Activated CD4-positive, alpha-beta memory T cell treated with anti-CD3 and anti-CD28 coated beads, Interleukin-2, amount 10 ng/mL, durations not matched to agents 7 days and 5 days (primary cell): ENCODE measurements at regions of chr1 and their contacts with region 1.

Region 1: DNA sequence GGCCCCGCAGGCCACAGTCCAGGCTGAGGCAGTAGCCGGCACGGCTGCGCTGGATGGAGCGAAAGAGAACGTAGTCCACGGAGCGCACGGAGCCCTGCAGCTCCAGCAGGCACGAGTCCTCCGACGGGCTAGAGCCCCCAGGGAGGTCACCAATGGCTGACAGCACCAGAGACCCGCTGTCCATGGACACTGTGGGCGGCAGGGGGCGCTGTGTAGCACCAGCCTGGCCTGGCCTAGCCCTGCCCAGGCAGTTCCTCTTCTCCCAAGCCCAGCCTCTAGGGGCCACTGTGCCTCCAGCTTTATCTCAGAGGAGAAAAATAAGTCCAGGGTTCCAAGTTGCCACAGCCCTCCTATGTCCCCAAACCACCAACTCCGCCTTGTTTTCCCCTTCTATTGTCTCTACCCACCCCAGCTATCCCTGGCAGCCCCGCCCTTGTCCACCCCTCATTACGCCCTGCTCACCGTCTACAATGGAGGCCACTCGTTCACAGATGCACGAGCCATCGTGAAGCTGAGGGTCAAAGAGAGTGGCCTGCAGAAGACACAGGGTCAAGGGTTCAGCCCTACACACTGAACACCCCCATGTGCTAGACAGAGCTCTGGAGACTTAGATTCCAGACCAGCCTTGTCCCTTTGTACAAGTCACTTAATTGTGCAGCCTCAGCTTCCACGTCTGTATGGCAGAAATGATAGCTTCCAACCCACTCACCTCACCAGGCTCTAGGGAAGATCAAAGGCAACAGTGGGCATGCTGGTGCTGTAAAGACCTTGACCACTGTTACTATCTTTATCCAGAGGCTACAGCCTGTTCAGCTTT is 4.4 kb downstream of the ENTREP3 start:
- DNase-seq: peak; percentile 97
- H3K4me3 Mint-ChIP-seq: peak overlapping the region; percentile 54
- H3K27ac Mint-ChIP-seq: peak overlapping the region; percentile 49
- H3K4me1 Mint-ChIP-seq: peaks cover 36% of the 10 kb centered on the region
- H3K27me3 Mint-ChIP-seq: no peaks in the 10 kb centered on the region

Region 2: DNA sequence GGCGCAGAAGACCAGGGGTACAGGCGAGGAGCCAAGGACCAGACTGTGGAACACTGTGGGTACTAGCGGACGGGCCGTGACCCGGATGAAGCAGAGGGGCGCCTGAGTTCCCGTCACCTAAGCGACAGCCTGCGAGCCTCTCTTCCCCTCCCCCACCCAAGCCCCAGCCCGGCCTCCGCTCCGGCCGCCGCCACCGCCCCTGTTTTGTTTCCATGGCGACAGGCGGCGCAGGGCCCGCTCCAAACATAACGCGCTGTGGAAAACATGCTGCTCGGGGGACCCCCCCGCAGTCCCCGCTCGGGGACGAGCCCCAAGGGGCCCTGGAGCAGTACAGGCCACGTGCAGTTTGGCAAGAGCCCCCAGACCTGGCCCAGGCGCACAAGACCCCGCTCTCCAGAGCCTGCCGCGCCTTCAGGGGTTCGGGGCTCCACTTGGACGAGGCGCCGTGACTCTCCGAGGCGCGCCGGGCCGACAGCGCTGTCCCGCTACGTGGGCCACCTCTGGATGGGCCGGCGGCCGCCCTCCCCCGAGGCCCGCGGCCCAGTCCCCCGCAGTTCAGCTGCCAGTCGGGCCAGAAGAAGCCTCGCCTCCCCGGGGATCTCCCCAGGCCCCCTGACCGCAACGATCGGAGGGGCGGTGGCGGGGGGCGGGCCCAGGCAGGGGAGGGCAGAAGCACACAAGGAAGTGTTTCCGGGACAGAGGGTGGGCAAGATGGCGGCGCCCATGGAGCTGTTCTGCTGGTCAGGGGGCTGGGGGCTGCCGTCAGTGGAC is 42.1 kb before region 1 on chr1 and contains the start of gene MTX1:
- CTCF ChIA-PET with region 1: interaction called, 19 read pairs
- POLR2A ChIA-PET with region 1: interaction called, 42 read pairs
- DNase-seq: peak; percentile 89
- H3K4me3 Mint-ChIP-seq: peak within 1 kb of the TSS; percentile 85
- H3K27ac Mint-ChIP-seq: peak within 1 kb of the TSS; percentile 80
- H3K4me1 Mint-ChIP-seq: peaks cover 40% of the 10 kb centered on the region
- H3K27me3 Mint-ChIP-seq: no peaks in the 10 kb centered on the region
- total RNA-seq, gene MTX1: 41.2 to 43.1 TPM

Region 3: GRCh38 chr1:155261852-155262673 is 11.2 kb after region 1 on chr1 and contains the start of gene SCAMP3:
- CTCF ChIA-PET with region 1: interaction called, 91 read pairs
- POLR2A ChIA-PET with region 1: interaction called, 26 read pairs
- DNase-seq: peak; percentile 90
- H3K4me3 Mint-ChIP-seq: peak within 1 kb of the TSS; percentile 98
- H3K27ac Mint-ChIP-seq: peak within 1 kb of the TSS; percentile 91
- H3K4me1 Mint-ChIP-seq: peaks cover 44% of the 10 kb centered on the region
- H3K27me3 Mint-ChIP-seq: no peaks in the 10 kb centered on the region
- total RNA-seq, gene SCAMP3: 87.5 to 91.9 TPM

Region 4: GRCh38 chr1:155277070-155277895 is 26.4 kb after region 1 on chr1 and contains the start of gene HCN3:
- CTCF ChIA-PET with region 1: interaction called, 29 read pairs
- POLR2A ChIA-PET with region 1: interaction called, 18 read pairs
- DNase-seq: peak; percentile 93
- H3K4me3 Mint-ChIP-seq: peak within 1 kb of the TSS; percentile 56
- H3K27ac Mint-ChIP-seq: no peak within 1 kb of the TSS
- H3K4me1 Mint-ChIP-seq: peaks cover 31% of the 10 kb centered on the region
- H3K27me3 Mint-ChIP-seq: peaks cover 4% of the 10 kb centered on the region
- total RNA-seq, gene HCN3: 3.7 to 4.9 TPM

Region 5: DNA sequence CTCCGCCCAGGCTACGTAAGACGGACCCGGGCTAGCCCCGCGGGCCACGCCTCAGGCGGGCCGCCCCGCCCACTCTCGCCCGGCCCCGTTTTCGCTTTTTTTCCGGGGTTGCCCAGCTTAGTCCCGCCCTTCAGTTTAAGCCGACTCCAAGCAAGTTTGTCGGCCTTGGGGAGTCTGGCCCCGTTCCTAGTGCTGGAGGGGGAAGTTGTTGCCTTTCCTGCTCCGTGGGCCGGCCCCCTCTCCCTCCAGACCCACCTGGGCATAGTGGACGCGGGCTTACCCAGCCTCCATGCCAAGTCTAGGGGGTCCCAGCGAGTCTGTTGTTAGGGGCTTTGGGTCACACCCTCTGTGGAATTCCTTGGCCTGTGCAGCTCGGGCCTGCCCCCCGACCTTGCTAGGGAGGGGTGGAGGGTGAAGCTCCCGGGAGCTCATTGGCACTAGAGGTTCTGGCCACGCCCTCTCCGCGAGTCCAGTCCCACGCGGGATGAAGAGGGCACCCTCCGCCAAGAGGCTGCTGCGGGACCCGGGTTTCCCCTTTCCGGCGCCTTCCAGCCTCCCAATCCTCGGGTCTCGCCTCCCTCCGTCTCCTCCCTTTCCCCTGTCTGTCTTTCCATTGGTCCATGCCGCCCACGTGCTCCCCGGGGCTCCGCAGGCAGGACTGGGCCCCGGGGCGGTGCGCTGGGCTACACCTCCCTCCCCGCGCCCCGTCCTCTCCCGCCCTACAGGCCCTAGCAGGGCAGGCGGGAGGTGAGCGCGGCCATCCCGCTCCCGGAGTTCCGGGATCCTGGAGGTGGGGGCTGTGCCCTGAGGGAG is 73.2 kb after region 1 on chr1:
- CTCF ChIA-PET with region 1: interaction called, 78 read pairs
- POLR2A ChIA-PET with region 1: interaction called, 22 read pairs
- DNase-seq: peak; percentile 92
- H3K4me3 Mint-ChIP-seq: peak overlapping the region; percentile 85
- H3K27ac Mint-ChIP-seq: peak overlapping the region; percentile 78
- H3K4me1 Mint-ChIP-seq: peaks cover 46% of the 10 kb centered on the region
- H3K27me3 Mint-ChIP-seq: no peaks in the 10 kb centered on the region

Region 6: GRCh38 chr1:155504207-155504606 is 253.4 kb after region 1 on chr1:
- CTCF ChIA-PET with region 1: interaction called, 13 read pairs
- POLR2A ChIA-PET with region 1: no interaction called
- DNase-seq: no peak
- H3K4me3 Mint-ChIP-seq: no peak overlapping the region
- H3K27ac Mint-ChIP-seq: no peak overlapping the region
- H3K4me1 Mint-ChIP-seq: peaks cover 29% of the 10 kb centered on the region
- H3K27me3 Mint-ChIP-seq: no peaks in the 10 kb centered on the region

Region 7: GRCh38 chr1:155596864-155597263 is 346.0 kb after region 1 on chr1:
- CTCF ChIA-PET with region 1: interaction called, 19 read pairs
- POLR2A ChIA-PET with region 1: no interaction called
- DNase-seq: no peak
- H3K4me3 Mint-ChIP-seq: no peak overlapping the region
- H3K27ac Mint-ChIP-seq: no peak overlapping the region
- H3K4me1 Mint-ChIP-seq: peaks cover 13% of the 10 kb centered on the region
- H3K27me3 Mint-ChIP-seq: no peaks in the 10 kb centered on the region